ENCODE measurements at regions of chr12 and their contacts with region 1.

Region 1: GRCh38 chr12:112046003-112046402 is 32.8 kb downstream of the ERP29 start:
- DNase-seq: peak; percentile 11
- ATAC-seq: peak; percentile 49
- H3K4me3 ChIP-seq: no peak overlapping the region
- H3K27ac ChIP-seq: no peak overlapping the region
- H3K4me1 ChIP-seq: peaks cover 5% of the 10 kb centered on the region
- H3K27me3 ChIP-seq: no peaks in the 10 kb centered on the region
- CTCF ChIP-seq: no peak
- POLR2A ChIP-seq: no peak
- RAD21 ChIP-seq: no peak

Region 2: GRCh38 chr12:112005419-112006395 is 40.3 kb before region 1 on chr12:
- CTCF ChIA-PET with region 1: no interaction called
- POLR2A ChIA-PET with region 1: no interaction called
- dilution Hi-C with region 1: no loop called
- in situ Hi-C with region 1: no loop called
- intact Hi-C with region 1: no loop called
- DNase-seq: peak; percentile 46
- ATAC-seq: peak; percentile 63
- H3K4me3 ChIP-seq: no peak overlapping the region; the same call in 1 of the 2 replicates
- H3K27ac ChIP-seq: no peak overlapping the region
- H3K4me1 ChIP-seq: peaks cover 7% of the 10 kb centered on the region
- H3K27me3 ChIP-seq: no peaks in the 10 kb centered on the region
- CTCF ChIP-seq: no peak
- POLR2A ChIP-seq: no peak
- RAD21 ChIP-seq: no peak

Region 3: DNA sequence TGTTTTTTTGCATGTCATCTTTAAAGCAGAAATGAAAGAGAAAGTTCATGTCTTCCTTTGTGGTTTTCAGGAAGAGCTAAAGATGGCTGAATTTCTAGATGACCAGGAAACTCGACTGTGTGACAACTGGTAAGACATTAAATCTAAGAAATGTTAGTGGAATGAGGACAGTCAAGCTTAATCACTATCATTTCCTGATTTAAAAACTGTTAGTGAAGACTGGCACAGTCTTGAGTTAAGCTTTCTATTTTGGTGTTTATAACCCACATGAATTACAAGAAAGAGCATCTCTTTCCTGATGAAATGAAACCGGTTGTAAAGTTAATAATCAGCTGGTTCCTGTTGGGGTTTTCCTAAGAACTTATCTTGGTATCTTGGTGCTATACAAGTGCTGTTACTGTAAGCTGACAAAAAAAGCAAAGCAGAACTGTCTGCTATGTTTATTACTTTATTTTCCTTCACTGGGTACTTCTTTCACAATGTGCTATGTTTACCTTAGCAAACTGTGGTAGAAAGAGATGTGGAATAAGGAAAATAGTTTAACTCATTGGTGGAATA is 84.5 kb after region 1 on chr12:
- CTCF ChIA-PET with region 1: no interaction called
- POLR2A ChIA-PET with region 1: no interaction called
- dilution Hi-C with region 1: no loop called
- in situ Hi-C with region 1: no loop called
- intact Hi-C with region 1: loop called (anchors 10 kb)
- DNase-seq: peak; percentile 36
- ATAC-seq: peak; percentile 28
- H3K4me3 ChIP-seq: peak overlapping the region; percentile 25; the same call in 1 of the 2 replicates
- H3K27ac ChIP-seq: peak overlapping the region; percentile 52; the same call in 1 of the 2 replicates
- H3K4me1 ChIP-seq: peaks cover 8% of the 10 kb centered on the region
- H3K27me3 ChIP-seq: no peaks in the 10 kb centered on the region
- CTCF ChIP-seq: no peak
- POLR2A ChIP-seq: no peak
- RAD21 ChIP-seq: no peak